Activated CD4-positive, alpha-beta T cell treated with anti-CD3 and anti-CD28 coated beads for 36 hours (primary cell): ENCODE measurements at regions of chr3 and their contacts with region 1.

Region 1: DNA sequence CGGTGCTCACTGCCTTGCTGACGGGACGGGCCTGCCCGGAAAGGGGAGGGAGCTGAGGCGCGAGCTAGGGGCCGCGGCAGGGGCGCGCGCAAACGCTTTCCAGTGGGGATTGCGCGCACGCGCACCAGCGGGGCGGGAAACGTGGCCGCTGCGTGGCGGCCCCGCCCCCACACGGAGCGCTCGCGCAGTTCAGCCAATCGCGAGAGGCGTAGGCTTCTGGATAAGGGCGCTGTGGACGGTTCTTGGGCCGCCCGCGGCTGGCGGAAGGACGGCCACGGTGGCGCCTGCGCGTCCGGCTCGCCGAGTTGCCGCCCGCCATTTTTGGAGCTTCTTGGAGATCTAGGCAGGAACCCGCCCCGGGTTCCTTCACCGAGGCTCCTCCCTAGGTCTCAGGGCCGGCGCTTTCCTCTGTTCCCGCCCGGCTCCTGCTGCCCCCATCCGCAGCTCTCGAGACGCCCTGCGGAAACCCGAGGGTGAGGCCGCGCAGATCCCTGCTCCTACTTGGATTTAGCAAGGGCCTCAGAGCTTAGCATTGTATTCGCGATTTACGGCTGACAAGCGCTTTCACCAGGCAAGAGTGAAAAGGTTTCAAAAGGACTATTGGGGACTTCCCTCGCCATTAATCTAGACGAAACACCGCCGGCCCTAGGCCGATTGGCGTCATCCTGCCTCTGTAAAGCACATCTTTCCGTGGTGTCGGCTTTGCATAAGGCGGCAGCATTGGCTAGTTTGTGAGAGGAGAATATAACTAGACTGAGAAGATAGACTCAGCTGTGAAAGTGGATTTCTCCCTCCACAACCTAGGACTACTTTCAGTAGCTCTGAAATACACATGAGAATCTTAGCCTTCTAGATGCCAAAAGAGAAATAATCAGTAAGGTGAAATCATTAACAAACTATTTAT is 496 bp upstream of the STAG1 start:
- DNase-seq: peak; percentile 99
- ATAC-seq: peak; percentile 87
- H3K4me3 Mint-ChIP-seq: peak overlapping the region; percentile 86
- H3K27ac Mint-ChIP-seq: peak overlapping the region; percentile 98
- H3K4me1 Mint-ChIP-seq: peaks cover 35% of the 10 kb centered on the region
- H3K27me3 Mint-ChIP-seq: no peaks in the 10 kb centered on the region

Region 2: DNA sequence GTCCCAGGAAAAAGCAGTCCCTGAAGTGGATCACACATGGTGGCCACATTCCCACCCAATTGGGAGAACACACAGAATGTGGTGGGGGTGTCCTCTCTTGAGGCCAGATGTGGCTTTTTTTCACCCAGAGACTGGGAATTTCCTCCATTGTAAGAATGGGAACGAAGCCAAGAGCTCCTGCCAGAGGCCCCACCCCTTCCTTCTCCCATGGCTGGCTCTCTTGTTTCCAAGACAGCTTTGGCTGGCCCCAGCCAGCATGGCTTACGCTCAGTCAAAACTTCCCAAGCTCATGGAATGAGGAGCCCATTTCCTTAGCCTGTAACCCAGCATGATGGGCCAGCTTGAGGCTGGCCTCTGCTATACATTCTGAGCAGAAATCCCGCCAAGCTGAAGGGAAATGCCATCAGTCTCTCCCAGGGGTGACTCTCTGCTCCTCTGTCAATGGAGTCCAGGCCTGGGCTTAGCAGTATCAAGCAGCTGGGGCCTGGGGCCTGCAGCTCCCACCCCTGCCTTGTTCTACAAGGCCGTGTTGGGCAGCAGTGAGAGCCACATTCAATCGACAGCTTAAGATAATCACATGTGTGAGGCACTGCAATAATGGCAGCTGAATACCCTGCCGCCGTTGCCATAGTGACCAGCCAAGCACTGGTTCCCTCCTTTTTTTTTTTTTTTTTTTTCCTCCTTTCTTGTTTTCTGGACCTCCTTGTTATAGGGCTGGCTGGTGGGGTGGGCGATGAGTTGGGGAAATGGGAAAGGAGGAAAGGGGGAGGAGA is 1815.2 kb before region 1 on chr3:
- CTCF ChIA-PET with region 1: no interaction called
- POLR2A ChIA-PET with region 1: no interaction called
- intact Hi-C with region 1: no loop called
- DNase-seq: no peak
- ATAC-seq: no peak
- H3K4me3 Mint-ChIP-seq: no peak overlapping the region
- H3K27ac Mint-ChIP-seq: no peak overlapping the region
- H3K4me1 Mint-ChIP-seq: no peaks in the 10 kb centered on the region
- H3K27me3 Mint-ChIP-seq: no peaks in the 10 kb centered on the region

Region 3: GRCh38 chr3:136196401-136197158 is 556.1 kb before region 1 on chr3:
- CTCF ChIA-PET with region 1: interaction called, 3 read pairs
- POLR2A ChIA-PET with region 1: interaction called, 24 read pairs
- intact Hi-C with region 1: loop called (anchors 1 kb)
- DNase-seq: peak; percentile 100
- ATAC-seq: peak; percentile 82
- H3K4me3 Mint-ChIP-seq: peak overlapping the region; percentile 100
- H3K27ac Mint-ChIP-seq: peak overlapping the region; percentile 98
- H3K4me1 Mint-ChIP-seq: peaks cover 25% of the 10 kb centered on the region
- H3K27me3 Mint-ChIP-seq: no peaks in the 10 kb centered on the region

Region 4: DNA sequence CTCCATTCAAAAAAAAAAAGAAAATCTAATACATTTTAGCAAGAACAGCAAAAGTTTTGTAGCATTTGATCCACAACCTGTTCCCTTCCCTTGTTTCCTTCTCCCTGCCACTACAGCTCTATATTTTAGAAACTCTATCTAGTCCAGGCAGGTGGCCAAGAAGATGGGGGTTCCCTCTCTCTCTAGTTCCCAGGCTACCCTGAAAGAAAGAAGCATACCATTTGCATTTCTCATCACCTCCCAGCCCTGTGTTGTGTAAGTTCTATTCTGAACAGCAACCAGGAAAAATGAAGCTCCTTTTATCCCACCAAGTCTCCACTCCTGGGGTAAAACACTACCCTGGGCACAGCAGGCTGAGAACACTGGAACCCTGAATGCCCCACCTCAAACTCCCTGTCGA is 402.5 kb before region 1 on chr3:
- CTCF ChIA-PET with region 1: interaction called, 3 read pairs
- POLR2A ChIA-PET with region 1: no interaction called
- intact Hi-C with region 1: loop called in 1 of 2 experiments (anchors 1 kb)
- DNase-seq: no peak
- ATAC-seq: no peak
- H3K4me3 Mint-ChIP-seq: no peak overlapping the region
- H3K27ac Mint-ChIP-seq: no peak overlapping the region
- H3K4me1 Mint-ChIP-seq: peaks cover 15% of the 10 kb centered on the region
- H3K27me3 Mint-ChIP-seq: no peaks in the 10 kb centered on the region

Region 5: GRCh38 chr3:136495213-136495612 is 257.5 kb before region 1 on chr3:
- CTCF ChIA-PET with region 1: no interaction called
- POLR2A ChIA-PET with region 1: no interaction called
- intact Hi-C with region 1: no loop called
- DNase-seq: no peak
- ATAC-seq: no peak
- H3K4me3 Mint-ChIP-seq: no peak overlapping the region
- H3K27ac Mint-ChIP-seq: no peak overlapping the region
- H3K4me1 Mint-ChIP-seq: no peaks in the 10 kb centered on the region
- H3K27me3 Mint-ChIP-seq: no peaks in the 10 kb centered on the region

Region 6: GRCh38 chr3:136734382-136735070 is 18.1 kb before region 1 on chr3:
- CTCF ChIA-PET with region 1: interaction called, 5 read pairs
- POLR2A ChIA-PET with region 1: interaction called, 11 read pairs
- intact Hi-C with region 1: no loop called
- DNase-seq: no peak
- ATAC-seq: no peak
- H3K4me3 Mint-ChIP-seq: no peak overlapping the region
- H3K27ac Mint-ChIP-seq: peak overlapping the region; percentile 42
- H3K4me1 Mint-ChIP-seq: peaks cover 59% of the 10 kb centered on the region
- H3K27me3 Mint-ChIP-seq: no peaks in the 10 kb centered on the region

Region 7: GRCh38 chr3:136861890-136862616 is 109.4 kb after region 1 on chr3 and contains the start of gene NCK1:
- CTCF ChIA-PET with region 1: interaction called, 21 read pairs
- POLR2A ChIA-PET with region 1: interaction called, 46 read pairs
- intact Hi-C with region 1: loop called (anchors 1 kb)
- DNase-seq: peak; percentile 99
- ATAC-seq: peak; percentile 99
- H3K4me3 Mint-ChIP-seq: peak within 1 kb of the TSS; percentile 96
- H3K27ac Mint-ChIP-seq: peak within 1 kb of the TSS; percentile 98
- H3K4me1 Mint-ChIP-seq: peaks cover 41% of the 10 kb centered on the region
- H3K27me3 Mint-ChIP-seq: no peaks in the 10 kb centered on the region
- total RNA-seq, gene NCK1: 30.4 to 31.9 TPM

Region 8: GRCh38 chr3:136882572-136882971 is 129.9 kb after region 1 on chr3:
- CTCF ChIA-PET with region 1: no interaction called
- POLR2A ChIA-PET with region 1: no interaction called
- intact Hi-C with region 1: no loop called
- DNase-seq: no peak
- ATAC-seq: peak; percentile 77
- H3K4me3 Mint-ChIP-seq: no peak overlapping the region
- H3K27ac Mint-ChIP-seq: no peak overlapping the region
- H3K4me1 Mint-ChIP-seq: peaks cover 64% of the 10 kb centered on the region
- H3K27me3 Mint-ChIP-seq: no peaks in the 10 kb centered on the region